ENCODE measurements at regions of chr3 and their contacts with region 1.

Region 1: GRCh38 chr3:159884661-159885402 is 103.8 kb upstream of the IL12A start:
- DNase-seq: no peak
- H3K4me3 Mint-ChIP-seq: no peak overlapping the region
- H3K27ac Mint-ChIP-seq: no peak overlapping the region
- H3K4me1 Mint-ChIP-seq: no peaks in the 10 kb centered on the region
- H3K27me3 Mint-ChIP-seq: peaks cover 13% of the 10 kb centered on the region

Region 2: GRCh38 chr3:159668990-159669476 is 215.8 kb before region 1 on chr3:
- CTCF ChIA-PET with region 1: no interaction called
- POLR2A ChIA-PET with region 1: no interaction called
- intact Hi-C with region 1: no loop called
- DNase-seq: no peak
- H3K4me3 Mint-ChIP-seq: no peak overlapping the region
- H3K27ac Mint-ChIP-seq: no peak overlapping the region
- H3K4me1 Mint-ChIP-seq: no peaks in the 10 kb centered on the region
- H3K27me3 Mint-ChIP-seq: no peaks in the 10 kb centered on the region

Region 3: DNA sequence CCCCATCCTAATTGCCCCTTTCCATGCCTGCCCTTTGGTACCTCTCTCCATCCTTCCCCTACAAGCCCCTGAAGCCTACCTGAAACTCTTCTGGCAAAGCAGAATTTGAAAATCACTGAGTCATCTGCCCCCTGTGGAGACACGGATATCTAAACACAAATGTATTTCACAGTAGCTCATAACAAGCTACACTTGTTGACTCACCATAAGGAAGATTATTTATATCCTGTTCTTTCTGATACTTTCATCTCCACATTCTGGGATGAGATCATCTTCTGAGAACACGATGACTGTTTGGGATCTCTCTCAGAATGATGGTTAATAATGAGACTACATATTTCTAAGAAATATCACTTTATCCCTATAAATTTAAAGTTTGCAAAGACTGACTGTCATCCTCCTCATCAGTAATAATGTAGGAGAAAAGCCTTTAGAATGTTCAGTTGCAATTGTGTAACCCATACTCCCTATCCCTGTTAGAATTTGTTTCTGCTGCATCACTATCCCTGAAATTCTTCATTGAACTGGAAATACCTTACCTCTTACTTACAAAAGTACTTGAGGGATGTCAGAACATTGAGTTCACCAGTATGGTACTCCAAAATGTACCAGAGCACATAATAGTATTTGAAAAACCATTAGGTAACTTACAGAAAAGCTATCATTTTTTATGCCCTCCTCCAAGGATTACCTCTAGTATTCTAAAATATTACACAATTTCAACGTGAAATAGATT is 12.3 kb before region 1 on chr3:
- CTCF ChIA-PET with region 1: interaction called, 16 read pairs
- POLR2A ChIA-PET with region 1: no interaction called
- intact Hi-C with region 1: no loop called
- DNase-seq: no peak
- H3K4me3 Mint-ChIP-seq: no peak overlapping the region
- H3K27ac Mint-ChIP-seq: no peak overlapping the region
- H3K4me1 Mint-ChIP-seq: no peaks in the 10 kb centered on the region
- H3K27me3 Mint-ChIP-seq: peaks cover 16% of the 10 kb centered on the region

Region 4: DNA sequence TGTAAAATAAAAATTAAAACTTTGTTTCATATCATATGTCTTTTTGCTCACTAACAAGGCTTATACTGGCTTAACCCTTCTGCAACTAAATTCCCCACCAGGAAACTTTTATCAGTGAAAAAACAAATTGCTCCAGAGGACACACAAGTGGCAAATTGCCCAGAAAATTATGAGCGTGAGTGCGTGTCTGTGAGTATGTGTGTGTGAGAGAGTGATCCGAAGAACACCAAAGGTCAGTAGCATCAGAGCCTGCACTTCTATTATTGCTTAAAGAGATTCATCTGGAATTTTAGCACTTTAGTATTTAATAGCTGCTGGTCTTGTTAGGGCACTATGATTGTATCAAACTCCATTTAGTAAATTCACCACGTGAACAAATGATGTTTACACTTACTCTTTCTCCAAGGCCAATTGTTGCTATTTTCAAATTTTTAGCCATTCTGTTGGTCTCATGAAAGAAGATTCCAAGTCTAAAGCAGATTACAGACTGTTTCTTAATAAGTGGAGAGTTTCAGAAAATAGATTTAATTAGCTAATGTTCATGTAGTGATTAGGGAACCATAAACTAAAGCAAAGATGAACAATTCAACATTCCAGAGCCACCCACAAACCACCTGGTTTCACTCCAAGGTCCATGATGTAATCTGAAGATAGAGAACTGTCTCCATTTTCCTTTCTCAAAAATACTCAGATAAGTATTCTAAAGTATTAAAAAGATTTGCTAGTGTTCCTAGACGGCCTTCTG is 12.7 kb after region 1 on chr3:
- CTCF ChIA-PET with region 1: interaction called, 10 read pairs
- POLR2A ChIA-PET with region 1: no interaction called
- intact Hi-C with region 1: no loop called
- DNase-seq: no peak
- H3K4me3 Mint-ChIP-seq: no peak overlapping the region
- H3K27ac Mint-ChIP-seq: no peak overlapping the region
- H3K4me1 Mint-ChIP-seq: no peaks in the 10 kb centered on the region
- H3K27me3 Mint-ChIP-seq: peaks cover 8% of the 10 kb centered on the region

Region 5: GRCh38 chr3:159919873-159920272 is 35.0 kb after region 1 on chr3:
- CTCF ChIA-PET with region 1: no interaction called
- POLR2A ChIA-PET with region 1: no interaction called
- intact Hi-C with region 1: no loop called
- DNase-seq: no peak
- H3K4me3 Mint-ChIP-seq: no peak overlapping the region
- H3K27ac Mint-ChIP-seq: no peak overlapping the region
- H3K4me1 Mint-ChIP-seq: no peaks in the 10 kb centered on the region
- H3K27me3 Mint-ChIP-seq: peaks cover 3% of the 10 kb centered on the region

Region 6: GRCh38 chr3:160003520-160004128 is 118.8 kb after region 1 on chr3:
- CTCF ChIA-PET with region 1: interaction called, 139 read pairs
- POLR2A ChIA-PET with region 1: no interaction called
- intact Hi-C with region 1: loop called (anchors 1 kb)
- DNase-seq: peak; percentile 62
- H3K4me3 Mint-ChIP-seq: no peak overlapping the region
- H3K27ac Mint-ChIP-seq: no peak overlapping the region
- H3K4me1 Mint-ChIP-seq: no peaks in the 10 kb centered on the region
- H3K27me3 Mint-ChIP-seq: no peaks in the 10 kb centered on the region

Region 7: DNA sequence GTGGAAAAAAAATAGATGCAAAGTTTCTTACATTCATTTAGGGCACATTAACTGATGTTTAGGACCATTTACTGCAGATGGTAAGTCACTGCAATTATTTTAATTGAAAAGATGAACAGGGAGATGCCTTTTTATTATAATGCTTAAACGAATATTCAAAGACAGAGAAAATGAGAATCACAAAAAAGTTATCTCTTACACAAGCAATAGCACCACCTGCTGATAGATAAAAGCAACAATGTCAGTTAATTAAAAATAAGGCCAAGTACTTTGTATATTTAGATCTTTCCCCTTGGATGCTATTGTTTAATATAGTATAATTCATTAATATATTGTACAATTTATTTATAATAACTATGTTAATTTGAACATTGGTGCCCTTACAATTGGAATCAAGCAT is 458.3 kb after region 1 on chr3:
- CTCF ChIA-PET with region 1: interaction called, 4 read pairs
- POLR2A ChIA-PET with region 1: no interaction called
- intact Hi-C with region 1: loop called (anchors 10 kb)
- DNase-seq: no peak
- H3K4me3 Mint-ChIP-seq: no peak overlapping the region
- H3K27ac Mint-ChIP-seq: no peak overlapping the region
- H3K4me1 Mint-ChIP-seq: no peaks in the 10 kb centered on the region
- H3K27me3 Mint-ChIP-seq: no peaks in the 10 kb centered on the region

Region 8: DNA sequence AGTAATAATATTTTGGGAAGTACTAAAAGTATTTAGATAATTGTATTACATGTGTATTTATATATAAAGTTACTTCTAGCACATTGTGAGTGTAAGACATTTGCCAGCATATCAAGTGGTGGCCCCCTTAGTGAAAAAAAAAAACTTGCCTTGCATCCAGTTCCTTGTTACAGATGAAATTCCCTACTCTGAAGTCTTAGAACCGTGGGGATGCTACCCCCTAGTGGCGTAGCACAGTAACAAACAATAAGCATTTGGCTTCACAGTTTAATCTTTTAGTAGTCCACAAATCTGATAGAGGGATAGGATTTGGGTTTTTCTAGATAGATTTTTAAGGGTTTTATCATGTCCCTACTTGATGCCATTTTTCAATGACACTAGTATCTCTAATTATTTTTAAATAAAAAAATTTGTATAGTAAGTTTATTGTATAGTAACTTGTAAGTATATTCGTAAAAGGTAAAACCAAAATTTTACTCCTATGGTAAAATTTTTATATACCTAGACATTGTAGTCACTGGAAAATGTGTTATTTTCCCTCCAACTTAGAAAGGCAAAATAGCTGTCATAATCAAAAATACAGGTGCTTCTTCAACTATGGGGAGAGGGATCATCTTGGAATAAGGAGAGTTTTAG is 528.9 kb after region 1 on chr3:
- CTCF ChIA-PET with region 1: interaction called, 26 read pairs
- POLR2A ChIA-PET with region 1: no interaction called
- intact Hi-C with region 1: no loop called
- DNase-seq: peak; percentile 71
- H3K4me3 Mint-ChIP-seq: no peak overlapping the region
- H3K27ac Mint-ChIP-seq: peak overlapping the region; percentile 33
- H3K4me1 Mint-ChIP-seq: peaks cover 16% of the 10 kb centered on the region
- H3K27me3 Mint-ChIP-seq: no peaks in the 10 kb centered on the region

Measured in activated CD4-positive, alpha-beta memory T cell treated with anti-CD3 and anti-CD28 coated beads for 36 hours (primary cell).